ENCODE measurements at regions of chr12 and their contacts with region 1.

Region 1: GRCh38 chr12:110100315-110100970 is 23.7 kb upstream of the IFT81 start:
- DNase-seq: peak; percentile 85
- ATAC-seq: peak; percentile 71
- H3K4me3 ChIP-seq: no peak overlapping the region
- H3K27ac ChIP-seq: no peak overlapping the region
- H3K4me1 ChIP-seq: peaks cover 4% of the 10 kb centered on the region; the same call in 1 of the 2 replicates
- H3K27me3 ChIP-seq: no peaks in the 10 kb centered on the region
- CTCF ChIP-seq: peak; percentile 99

Region 2: DNA sequence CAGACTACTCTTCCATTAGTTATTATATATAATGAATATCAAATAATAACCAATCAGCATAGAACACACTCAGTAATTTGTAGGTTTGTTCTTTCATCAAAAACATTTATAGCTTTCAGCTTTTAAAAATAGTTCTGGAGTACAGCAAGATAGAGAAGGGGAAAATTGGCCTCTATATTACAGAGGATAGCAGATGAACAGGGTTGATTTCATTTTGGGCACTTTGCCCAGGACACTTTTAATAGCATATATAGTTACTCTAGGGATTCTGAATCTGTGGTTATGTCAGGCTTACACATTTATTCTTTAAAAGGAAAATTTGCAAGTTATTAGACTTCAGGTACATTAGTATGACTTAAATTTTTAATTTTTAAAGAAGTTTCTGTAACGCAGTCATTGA is 76.3 kb after region 1 on chr12:
- CTCF ChIA-PET with region 1: no interaction called
- POLR2A ChIA-PET with region 1: no interaction called
- intact Hi-C with region 1: no loop called
- DNase-seq: peak; percentile 46
- ATAC-seq: peak; percentile 88
- H3K4me3 ChIP-seq: no peak overlapping the region
- H3K27ac ChIP-seq: no peak overlapping the region
- H3K4me1 ChIP-seq: peaks cover 4% of the 10 kb centered on the region; the same call in 1 of the 2 replicates
- H3K27me3 ChIP-seq: no peaks in the 10 kb centered on the region
- CTCF ChIP-seq: no peak

Region 3: DNA sequence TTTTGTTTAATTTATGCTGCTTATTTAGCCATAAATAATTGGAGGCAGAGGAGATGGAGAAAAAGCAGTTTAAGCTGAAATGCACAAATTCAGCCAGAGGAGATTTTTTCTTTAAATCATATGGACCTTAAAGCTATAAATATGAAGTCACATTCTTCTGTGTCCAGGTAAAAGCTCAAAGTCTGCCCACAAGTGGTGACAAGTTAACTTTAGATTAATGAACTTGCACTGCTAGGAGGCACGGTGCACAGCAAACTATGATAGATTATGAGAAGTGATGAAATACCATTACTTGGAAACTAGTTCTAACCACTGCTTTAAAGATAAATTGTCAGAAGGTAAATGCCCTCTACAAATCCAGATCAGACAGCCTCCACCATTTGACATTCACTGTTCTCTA is 92.8 kb after region 1 on chr12:
- CTCF ChIA-PET with region 1: no interaction called
- POLR2A ChIA-PET with region 1: interaction called, 12 read pairs
- intact Hi-C with region 1: no loop called
- DNase-seq: no peak
- ATAC-seq: no peak
- H3K4me3 ChIP-seq: no peak overlapping the region
- H3K27ac ChIP-seq: no peak overlapping the region
- H3K4me1 ChIP-seq: no peaks in the 10 kb centered on the region
- H3K27me3 ChIP-seq: no peaks in the 10 kb centered on the region
- CTCF ChIP-seq: no peak

Region 4: DNA sequence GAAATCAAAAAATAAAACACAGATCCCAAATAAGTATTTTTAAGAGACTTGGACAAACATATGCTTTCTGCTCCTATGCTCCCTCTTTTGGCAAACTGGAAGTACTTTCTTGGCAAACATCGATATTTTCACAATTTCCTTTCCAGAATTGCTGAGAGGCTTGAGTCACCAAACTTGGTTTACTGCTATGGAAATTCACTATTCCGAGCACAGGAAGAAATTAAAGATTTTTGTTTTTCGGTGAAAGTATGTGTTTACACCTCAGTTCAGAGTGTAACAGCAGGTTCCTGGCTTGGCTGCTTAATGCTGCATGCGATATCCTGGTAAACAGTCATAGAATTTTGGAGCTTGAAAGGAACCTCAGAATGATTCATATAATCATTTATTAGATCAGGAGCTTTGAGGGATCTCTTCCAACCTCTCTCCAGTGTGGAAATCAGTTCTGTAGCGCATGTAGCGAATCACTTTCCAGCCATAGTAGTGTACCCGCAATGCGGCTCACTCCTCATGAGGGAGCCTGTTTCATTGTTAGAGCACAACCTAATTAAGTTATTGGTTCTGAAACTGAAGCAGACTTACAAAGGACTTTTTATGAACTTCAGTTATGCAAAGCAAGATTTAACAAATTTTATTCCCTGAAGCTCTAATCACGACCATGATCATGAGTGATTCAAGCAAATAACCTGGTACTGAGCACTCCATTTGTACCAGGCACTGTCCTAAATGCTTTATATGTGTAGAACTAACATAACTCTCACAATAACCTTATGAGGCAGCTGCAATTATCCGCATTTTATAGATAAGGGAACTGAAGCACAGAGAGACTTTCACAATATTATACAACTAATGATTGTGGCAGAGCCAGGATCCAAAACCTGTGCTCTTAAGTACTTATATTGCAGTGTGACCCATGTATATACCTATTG is 124.2 kb after region 1 on chr12:
- CTCF ChIA-PET with region 1: no interaction called
- POLR2A ChIA-PET with region 1: no interaction called
- intact Hi-C with region 1: loop called (anchors 1 kb)
- DNase-seq: peak; percentile 91
- ATAC-seq: peak; percentile 65
- H3K4me3 ChIP-seq: peak overlapping the region; percentile 64
- H3K27ac ChIP-seq: peak overlapping the region; percentile 91
- H3K4me1 ChIP-seq: peaks cover 27% of the 10 kb centered on the region
- H3K27me3 ChIP-seq: no peaks in the 10 kb centered on the region
- CTCF ChIP-seq: peak; percentile 80

Region 5: GRCh38 chr12:110280779-110281548 is 180.5 kb after region 1 on chr12 and contains the start of gene ATP2A2:
- CTCF ChIA-PET with region 1: no interaction called
- POLR2A ChIA-PET with region 1: interaction called, 3 read pairs
- intact Hi-C with region 1: loop called (anchors 2 kb)
- DNase-seq: peak; percentile 96
- ATAC-seq: peak; percentile 73
- H3K4me3 ChIP-seq: peak within 1 kb of the TSS; percentile 85
- H3K27ac ChIP-seq: peak within 1 kb of the TSS; percentile 84
- H3K4me1 ChIP-seq: peaks cover 39% of the 10 kb centered on the region
- H3K27me3 ChIP-seq: no peaks in the 10 kb centered on the region
- CTCF ChIP-seq: no peak
- total RNA-seq, gene ATP2A2: 174 and 211 TPM in 2 replicates

Region 6: GRCh38 chr12:110338754-110339153 is 238.3 kb after region 1 on chr12:
- CTCF ChIA-PET with region 1: no interaction called
- POLR2A ChIA-PET with region 1: no interaction called
- intact Hi-C with region 1: loop called (anchors 5 kb)
- DNase-seq: peak; percentile 25
- ATAC-seq: peak; percentile 8; the same call in 1 of the 2 replicates
- H3K4me3 ChIP-seq: no peak overlapping the region
- H3K27ac ChIP-seq: peak overlapping the region; percentile 73
- H3K4me1 ChIP-seq: peaks cover 21% of the 10 kb centered on the region
- H3K27me3 ChIP-seq: no peaks in the 10 kb centered on the region
- CTCF ChIP-seq: peak; percentile 61

Region 7: DNA sequence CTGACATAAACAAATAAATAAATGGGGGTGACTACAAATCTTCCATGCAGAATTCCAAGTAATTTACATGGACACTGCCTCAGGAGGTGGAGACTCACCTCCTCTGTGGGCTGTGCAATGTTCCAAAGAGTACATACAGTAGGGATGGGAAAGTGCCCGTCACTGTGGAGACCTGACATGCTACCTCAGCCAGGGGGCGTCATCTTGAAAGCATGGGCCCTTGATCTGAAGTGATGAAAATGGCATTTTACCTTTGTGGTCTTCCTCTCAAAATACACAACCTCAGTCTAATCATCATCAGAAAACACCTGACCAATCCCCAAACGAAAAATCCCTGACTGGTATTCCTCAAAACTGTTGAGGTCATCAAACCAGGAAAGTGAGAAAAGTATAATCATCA is 254.6 kb after region 1 on chr12:
- CTCF ChIA-PET with region 1: no interaction called
- POLR2A ChIA-PET with region 1: no interaction called
- intact Hi-C with region 1: loop called (anchors 5 kb)
- DNase-seq: peak; percentile 47
- ATAC-seq: peak; percentile 51
- H3K4me3 ChIP-seq: no peak overlapping the region
- H3K27ac ChIP-seq: no peak overlapping the region
- H3K4me1 ChIP-seq: no peaks in the 10 kb centered on the region
- H3K27me3 ChIP-seq: no peaks in the 10 kb centered on the region
- CTCF ChIP-seq: peak; percentile 62

Region 8: DNA sequence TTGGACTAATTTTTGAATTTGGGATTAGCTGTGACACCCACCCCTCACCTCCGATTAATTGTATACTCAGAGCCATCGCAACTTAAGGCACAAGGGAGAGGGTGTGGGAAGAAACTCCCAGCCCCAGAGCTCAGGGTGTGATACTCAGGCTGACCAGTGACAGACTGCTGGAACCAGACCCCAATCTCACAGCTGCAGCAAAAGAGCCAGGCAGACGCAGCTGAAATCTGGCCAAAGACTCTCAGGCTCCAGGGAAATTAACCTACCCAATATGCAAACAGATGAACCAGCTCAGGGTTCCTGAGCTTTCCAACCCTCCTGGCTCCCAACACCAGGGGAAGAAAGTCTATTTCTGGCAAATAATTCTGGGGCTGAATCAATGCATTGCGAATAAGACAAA is 272.6 kb after region 1 on chr12:
- CTCF ChIA-PET with region 1: no interaction called
- POLR2A ChIA-PET with region 1: interaction called, 34 read pairs
- intact Hi-C with region 1: no loop called
- DNase-seq: no peak
- ATAC-seq: no peak
- H3K4me3 ChIP-seq: no peak overlapping the region
- H3K27ac ChIP-seq: no peak overlapping the region
- H3K4me1 ChIP-seq: no peaks in the 10 kb centered on the region
- H3K27me3 ChIP-seq: no peaks in the 10 kb centered on the region
- CTCF ChIP-seq: no peak